HepG2 (cell line): ENCODE measurements at regions of chr2 and their contacts with region 1.

Region 1: GRCh38 chr2:86632672-86633651 is 9.3 kb upstream of the RNF103 start:
- DNase-seq: peak; percentile 83
- ATAC-seq: peak; percentile 86
- H3K4me3 ChIP-seq: peak overlapping the region in 2 of 3 experiments; percentile 36 to 51; a peak in 4 of 6 replicates
- H3K27ac ChIP-seq: peak overlapping the region; percentile 67
- H3K4me1 ChIP-seq: peaks cover 85% of the 10 kb centered on the region
- H3K27me3 ChIP-seq: no peaks in the 10 kb centered on the region
- CTCF ChIP-seq: no peak
- EP300 ChIP-seq: peak in 1 of 2 experiments; percentile 51; a peak in 1 of 4 replicates
- POLR2A ChIP-seq: no peak
- RAD21 ChIP-seq: no peak

Region 2: DNA sequence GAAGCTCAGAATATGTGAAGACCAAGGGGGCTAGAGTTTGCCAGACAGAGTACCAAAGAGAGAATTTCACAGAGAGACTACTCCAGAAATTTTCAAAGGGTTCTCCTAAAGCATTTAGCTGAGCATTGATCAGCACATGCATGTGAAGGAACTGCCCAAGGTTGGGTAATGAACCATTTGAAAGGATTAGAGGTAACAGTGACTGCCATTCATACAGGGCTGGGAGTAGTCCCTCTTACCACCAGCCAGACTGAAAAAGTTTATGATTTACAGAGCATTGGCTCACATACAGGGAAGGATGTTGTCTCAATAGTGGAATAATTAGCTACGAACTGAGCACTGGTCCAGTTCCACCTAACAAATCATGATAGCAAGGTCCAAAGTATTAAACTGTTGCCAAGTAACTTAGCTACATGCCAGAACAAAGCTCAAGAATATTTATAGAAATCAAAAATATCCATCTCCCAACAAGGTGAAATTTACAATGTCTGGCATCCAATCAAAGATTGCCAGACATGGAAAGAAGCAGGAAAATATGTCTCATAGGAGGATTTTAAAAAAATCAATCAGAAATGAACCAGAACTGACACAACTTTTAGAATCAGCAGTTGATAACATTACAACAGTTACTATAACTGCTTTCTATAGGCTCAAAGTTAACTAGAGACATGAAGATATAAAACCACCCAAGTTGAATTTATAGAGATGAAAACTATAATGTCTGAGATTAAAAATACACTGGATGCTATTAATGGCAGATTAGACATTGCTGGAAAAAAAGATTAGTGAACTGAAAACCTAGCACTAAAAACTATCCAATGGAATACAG is 16.4 kb after region 1 on chr2:
- CTCF ChIA-PET with region 1: no interaction called
- POLR2A ChIA-PET with region 1: interaction called, 14 read pairs
- in situ Hi-C with region 1: no loop called
- intact Hi-C with region 1: no loop called
- DNase-seq: peak; percentile 97
- ATAC-seq: peak; percentile 100
- H3K4me3 ChIP-seq: peak overlapping the region in 1 of 3 experiments; percentile 20; a peak in 1 of 6 replicates
- H3K27ac ChIP-seq: peak overlapping the region; percentile 84
- H3K4me1 ChIP-seq: peaks cover 29% of the 10 kb centered on the region
- H3K27me3 ChIP-seq: no peaks in the 10 kb centered on the region
- CTCF ChIP-seq: no peak
- EP300 ChIP-seq: peak; percentile 72 to 85; a peak in 3 of 4 replicates
- POLR2A ChIP-seq: peak in 1 of 2 experiments; percentile 45; a peak in 2 of 4 replicates
- RAD21 ChIP-seq: peak; percentile 39; the same call in 1 of the 2 replicates

Region 3: GRCh38 chr2:86686905-86687304 is 53.9 kb after region 1 on chr2:
- CTCF ChIA-PET with region 1: no interaction called
- POLR2A ChIA-PET with region 1: no interaction called
- in situ Hi-C with region 1: loop called (anchors 5 kb)
- intact Hi-C with region 1: no loop called
- DNase-seq: no peak
- ATAC-seq: no peak
- H3K4me3 ChIP-seq: no peak overlapping the region
- H3K27ac ChIP-seq: no peak overlapping the region
- H3K4me1 ChIP-seq: peaks cover 8% of the 10 kb centered on the region; the same call in 1 of the 2 replicates
- H3K27me3 ChIP-seq: no peaks in the 10 kb centered on the region
- CTCF ChIP-seq: no peak
- EP300 ChIP-seq: no peak
- POLR2A ChIP-seq: no peak
- RAD21 ChIP-seq: no peak